HepG2 (cell line): ENCODE measurements at regions of chr1 and their contacts with region 1.

Region 1: GRCh38 chr1:67685067-67685557 is at the start of gene GADD45A:
- DNase-seq: peak; percentile 98
- ATAC-seq: peak; percentile 91
- H3K4me3 ChIP-seq: peak within 1 kb of the TSS; percentile 97 to 99 (median 98)
- H3K27ac ChIP-seq: peak within 1 kb of the TSS; percentile 96
- H3K4me1 ChIP-seq: peaks cover 60% of the 10 kb centered on the region
- H3K27me3 ChIP-seq: no peaks in the 10 kb centered on the region; a peak in 1 of 5 replicates
- CTCF ChIP-seq: peak; percentile 23; the same call in 1 of the 2 replicates
- EP300 ChIP-seq: peak; percentile 14 to 22; a peak in 1 of 4 replicates
- POLR2A ChIP-seq: peak; percentile 98 to 100
- RAD21 ChIP-seq: peak; percentile 77
- total RNA-seq, gene GADD45A: 25.0 and 46.2 TPM in 2 replicates

Region 2: DNA sequence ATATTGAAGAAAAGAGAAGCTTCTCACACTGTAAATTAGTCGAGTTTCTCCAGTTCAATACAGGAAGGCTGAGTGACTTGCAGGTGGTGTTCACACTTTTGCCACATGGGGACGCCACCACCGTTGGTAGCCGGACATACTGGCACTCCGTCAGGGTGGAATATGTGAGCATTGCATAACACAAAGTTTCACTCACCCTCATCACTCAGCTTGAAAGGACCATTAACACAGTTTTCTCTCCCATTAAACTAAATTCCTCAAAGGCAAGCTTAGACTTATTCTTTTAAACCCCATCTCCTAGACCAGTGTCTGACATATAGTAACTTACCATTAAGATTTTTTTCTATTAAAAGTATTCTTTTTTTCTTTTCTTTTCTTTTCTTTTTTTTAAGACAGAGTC is 149.6 kb before region 1 on chr1:
- CTCF ChIA-PET with region 1: no interaction called
- POLR2A ChIA-PET with region 1: interaction called, 114 read pairs
- in situ Hi-C with region 1: loop called (anchors 5 kb)
- intact Hi-C with region 1: loop called (anchors 1 kb)
- DNase-seq: peak; percentile 80
- ATAC-seq: peak; percentile 68
- H3K4me3 ChIP-seq: peak overlapping the region in 1 of 3 experiments; percentile 19; a peak in 1 of 6 replicates
- H3K27ac ChIP-seq: peak overlapping the region; percentile 82
- H3K4me1 ChIP-seq: peaks cover 61% of the 10 kb centered on the region
- H3K27me3 ChIP-seq: no peaks in the 10 kb centered on the region
- CTCF ChIP-seq: peak; percentile 93
- EP300 ChIP-seq: peak in 1 of 2 experiments; percentile 51; a peak in 2 of 4 replicates
- POLR2A ChIP-seq: no peak
- RAD21 ChIP-seq: peak; percentile 90

Region 3: GRCh38 chr1:67570473-67571143 is 114.5 kb before region 1 on chr1:
- CTCF ChIA-PET with region 1: no interaction called
- POLR2A ChIA-PET with region 1: interaction called, 30 read pairs
- in situ Hi-C with region 1: loop called (anchors 10 kb)
- intact Hi-C with region 1: no loop called
- DNase-seq: no peak
- ATAC-seq: peak; percentile 18; the same call in 2 of the 3 replicates
- H3K4me3 ChIP-seq: no peak overlapping the region
- H3K27ac ChIP-seq: no peak overlapping the region
- H3K4me1 ChIP-seq: peaks cover 60% of the 10 kb centered on the region
- H3K27me3 ChIP-seq: no peaks in the 10 kb centered on the region; a peak in 2 of 5 replicates
- CTCF ChIP-seq: no peak
- EP300 ChIP-seq: no peak
- POLR2A ChIP-seq: no peak
- RAD21 ChIP-seq: no peak

Region 4: DNA sequence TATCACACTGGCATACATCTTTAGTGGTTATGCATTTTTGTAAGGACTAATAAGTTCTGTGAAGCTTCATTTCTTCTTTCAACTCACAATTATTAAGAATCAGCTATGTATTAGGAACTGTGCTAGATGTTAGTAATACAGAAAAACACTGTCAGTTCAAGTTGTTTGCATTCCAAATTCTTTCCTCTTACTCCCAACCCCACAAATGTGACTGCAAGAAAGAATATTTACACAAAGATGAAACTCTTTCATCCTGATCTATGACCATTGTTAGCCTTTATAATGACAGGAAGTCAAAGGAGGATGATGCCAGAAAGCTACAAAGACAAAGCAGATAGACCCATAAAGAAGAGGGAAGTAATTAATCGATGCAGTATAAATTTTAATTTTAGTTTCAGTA is 21.1 kb before region 1 on chr1:
- CTCF ChIA-PET with region 1: no interaction called
- POLR2A ChIA-PET with region 1: interaction called, 19 read pairs
- in situ Hi-C with region 1: no loop called
- intact Hi-C with region 1: loop called (anchors 1 kb)
- DNase-seq: peak; percentile 93
- ATAC-seq: peak; percentile 92
- H3K4me3 ChIP-seq: no peak overlapping the region
- H3K27ac ChIP-seq: peak overlapping the region; percentile 39
- H3K4me1 ChIP-seq: peaks cover 33% of the 10 kb centered on the region
- H3K27me3 ChIP-seq: no peaks in the 10 kb centered on the region
- CTCF ChIP-seq: no peak
- EP300 ChIP-seq: peak in 1 of 2 experiments; percentile 92; a peak in 3 of 4 replicates
- POLR2A ChIP-seq: no peak
- RAD21 ChIP-seq: no peak

Region 5: DNA sequence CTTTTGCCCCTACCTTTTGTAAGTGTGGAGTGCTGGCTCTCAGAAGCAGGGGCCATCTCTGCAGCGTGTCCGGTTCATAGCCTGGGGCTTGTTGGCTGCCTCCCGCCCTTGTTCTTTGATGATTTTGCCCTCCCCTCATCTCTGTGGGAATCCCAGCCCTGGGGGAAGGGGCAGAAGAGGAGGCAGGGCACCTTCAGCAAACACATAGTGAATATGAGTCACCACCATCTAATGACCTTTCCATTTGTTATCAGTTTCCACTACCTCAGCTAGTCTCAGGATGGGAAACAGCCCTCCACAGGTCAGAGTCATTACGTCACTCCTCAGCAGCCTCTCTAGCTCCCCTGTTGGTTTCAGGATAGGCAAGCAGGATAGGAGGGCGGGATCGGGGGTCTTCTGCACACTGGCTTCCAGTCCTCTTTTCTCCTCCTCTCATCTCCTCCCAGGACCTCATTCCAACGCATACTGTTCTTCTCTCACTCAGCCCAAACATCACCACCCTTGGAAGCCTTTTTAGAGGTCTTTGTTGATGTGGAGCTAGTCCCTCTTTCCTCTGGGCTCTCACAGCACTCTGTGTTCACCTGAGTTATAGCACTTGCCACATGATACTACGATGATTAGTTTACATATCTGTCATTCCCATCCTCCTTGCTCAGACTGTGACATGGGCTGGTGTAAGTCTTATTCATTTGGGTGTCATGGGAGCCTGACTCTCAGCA is 15.7 kb after region 1 on chr1:
- CTCF ChIA-PET with region 1: no interaction called
- POLR2A ChIA-PET with region 1: interaction called, 54 read pairs
- in situ Hi-C with region 1: no loop called
- intact Hi-C with region 1: loop called (anchors 1 kb)
- DNase-seq: peak; percentile 98
- ATAC-seq: peak; percentile 89
- H3K4me3 ChIP-seq: peak overlapping the region; percentile 14 to 41 (median 28); a peak in 5 of 6 replicates
- H3K27ac ChIP-seq: peak overlapping the region; percentile 61
- H3K4me1 ChIP-seq: peaks cover 60% of the 10 kb centered on the region
- H3K27me3 ChIP-seq: 0 out of 5 replicates have a peak, but pooled peaks cover 0 to 5% of the 10 kb centered on the region in 2 experiments
- CTCF ChIP-seq: peak; percentile 61
- EP300 ChIP-seq: peak; percentile 77 to 85; a peak in 2 of 4 replicates
- POLR2A ChIP-seq: peak in 1 of 2 experiments; percentile 23; a peak in 1 of 4 replicates
- RAD21 ChIP-seq: no peak

Region 6: DNA sequence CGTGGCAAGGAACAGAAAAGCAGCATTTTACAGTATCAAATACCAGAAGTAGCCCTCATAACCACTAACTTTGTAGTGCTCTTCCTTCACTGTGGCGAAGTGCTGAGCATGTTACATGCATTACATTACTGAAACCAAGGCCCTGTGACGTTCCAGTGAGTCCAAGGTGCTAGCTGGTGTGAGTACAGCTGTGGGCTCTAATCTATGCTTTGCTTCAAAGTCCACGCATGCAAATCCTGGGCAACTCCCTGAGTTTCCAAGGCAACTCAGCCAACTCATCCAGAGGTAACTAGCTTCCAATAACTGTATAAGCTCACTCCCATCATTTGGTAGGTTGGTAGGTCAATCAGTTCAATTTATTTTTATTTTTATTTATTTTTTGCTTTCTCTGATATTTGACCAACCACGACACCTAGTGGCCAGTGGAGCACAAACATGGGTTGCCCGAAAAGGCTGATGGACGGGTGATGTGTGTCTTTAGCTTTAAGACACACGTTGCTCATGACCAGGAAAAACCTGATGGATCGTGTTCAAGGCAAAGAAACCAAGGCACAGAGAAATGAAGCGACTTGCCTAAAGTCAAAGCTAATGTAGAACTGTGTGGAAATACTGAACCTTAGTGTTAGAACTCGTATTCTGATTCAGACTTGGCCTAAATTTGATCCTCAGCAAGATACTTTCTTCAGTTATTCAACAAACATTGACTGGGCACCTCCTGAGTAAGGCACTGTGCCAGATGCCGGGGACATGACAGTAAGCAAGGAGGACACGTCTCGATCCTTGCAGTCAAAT is 75.1 kb after region 1 on chr1:
- CTCF ChIA-PET with region 1: no interaction called
- POLR2A ChIA-PET with region 1: interaction called, 33 read pairs
- in situ Hi-C with region 1: loop called (anchors 5 kb)
- intact Hi-C with region 1: loop called (anchors 1 kb)
- DNase-seq: peak; percentile 87
- ATAC-seq: peak; percentile 99
- H3K4me3 ChIP-seq: peak overlapping the region in 1 of 3 experiments; percentile 7; a peak in 1 of 6 replicates
- H3K27ac ChIP-seq: peak overlapping the region; percentile 42
- H3K4me1 ChIP-seq: peaks cover 30% of the 10 kb centered on the region
- H3K27me3 ChIP-seq: peaks cover 2% of the 10 kb centered on the region in 2 experiments; a peak in 2 of 5 replicates
- CTCF ChIP-seq: peak; percentile 72
- EP300 ChIP-seq: peak; percentile 29 to 46; a peak in 1 of 4 replicates
- POLR2A ChIP-seq: no peak
- RAD21 ChIP-seq: peak; percentile 79; the same call in 1 of the 2 replicates